ENCODE measurements at regions of chr10 and their contacts with region 1.

Region 1: GRCh38 chr10:132503581-132504421 is 33.8 kb upstream of the INPP5A start:
- DNase-seq: no peak
- ATAC-seq: no peak
- H3K4me3 ChIP-seq: no peak overlapping the region
- H3K27ac ChIP-seq: no peak overlapping the region
- H3K4me1 ChIP-seq: no peaks in the 10 kb centered on the region; the same call in 1 of the 2 replicates
- H3K27me3 ChIP-seq: peaks cover 23% of the 10 kb centered on the region
- CTCF ChIP-seq: no peak
- POLR2A ChIP-seq: no peak
- RAD21 ChIP-seq: no peak

Region 2: DNA sequence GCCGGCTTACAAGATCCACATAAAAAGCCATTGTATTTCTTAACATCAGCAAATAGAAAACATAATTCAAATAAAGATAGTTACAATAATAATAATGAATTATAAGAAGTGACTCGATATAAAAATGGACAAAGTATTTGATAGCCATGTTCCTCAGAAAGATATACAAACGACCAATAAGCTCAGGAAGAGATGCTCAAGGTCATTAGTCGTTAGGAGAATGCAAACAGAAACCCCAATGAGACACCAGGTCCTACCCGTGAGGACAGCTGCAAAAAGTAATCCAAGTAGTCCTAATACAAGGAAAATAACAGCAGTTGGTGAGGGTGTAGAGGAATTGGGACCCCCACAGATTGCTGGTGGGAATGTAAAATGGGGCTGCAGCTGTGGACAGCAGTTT is 20.4 kb before region 1 on chr10:
- CTCF ChIA-PET with region 1: no interaction called
- POLR2A ChIA-PET with region 1: no interaction called
- dilution Hi-C with region 1: no loop called
- in situ Hi-C with region 1: no loop called
- intact Hi-C with region 1: loop called (anchors 1 kb)
- DNase-seq: no peak
- ATAC-seq: no peak
- H3K4me3 ChIP-seq: no peak overlapping the region
- H3K27ac ChIP-seq: no peak overlapping the region
- H3K4me1 ChIP-seq: peaks cover 7% of the 10 kb centered on the region
- H3K27me3 ChIP-seq: no peaks in the 10 kb centered on the region; the same call in 1 of the 2 replicates
- CTCF ChIP-seq: no peak
- POLR2A ChIP-seq: no peak
- RAD21 ChIP-seq: no peak

Region 3: DNA sequence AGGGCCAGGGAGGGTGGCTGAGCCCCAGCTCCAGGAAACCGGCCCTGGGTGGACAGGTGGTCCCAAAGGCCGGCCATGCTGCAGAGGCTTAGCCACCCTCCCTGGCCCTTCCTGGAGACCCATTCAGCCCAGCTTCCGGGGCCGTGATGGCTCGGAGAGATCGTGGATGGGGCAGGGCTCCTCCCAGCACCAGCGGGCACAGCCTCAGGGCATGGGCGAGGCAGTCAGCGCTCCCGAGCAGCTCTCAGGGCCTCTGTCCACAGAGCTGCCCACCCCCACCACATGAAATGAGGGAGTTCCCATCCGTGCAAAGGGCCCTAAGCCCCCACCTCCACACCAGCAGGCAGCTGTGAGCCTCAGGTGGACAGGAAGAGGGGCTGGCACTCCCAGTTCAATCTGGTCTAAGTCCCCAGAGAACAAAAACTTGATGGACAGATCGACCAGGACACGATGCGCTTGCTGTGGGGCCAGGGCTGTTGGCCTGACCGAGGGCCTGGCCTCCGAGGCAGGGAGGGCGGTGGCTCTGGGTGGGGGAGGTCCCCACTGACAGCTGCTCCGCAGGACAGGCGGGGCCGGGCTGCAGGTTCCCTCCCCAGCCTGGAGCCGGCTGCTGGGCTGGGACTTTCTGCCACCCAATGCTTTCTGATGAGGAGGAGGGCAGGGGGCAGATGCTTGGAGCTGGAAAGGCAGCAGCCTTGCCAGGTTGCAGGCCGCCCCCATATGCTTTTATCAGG is 546.4 kb after region 1 on chr10:
- CTCF ChIA-PET with region 1: no interaction called
- POLR2A ChIA-PET with region 1: no interaction called
- dilution Hi-C with region 1: no loop called
- in situ Hi-C with region 1: no loop called
- intact Hi-C with region 1: no loop called
- DNase-seq: no peak
- ATAC-seq: no peak
- H3K4me3 ChIP-seq: no peak overlapping the region
- H3K27ac ChIP-seq: no peak overlapping the region
- H3K4me1 ChIP-seq: no peaks in the 10 kb centered on the region
- H3K27me3 ChIP-seq: peaks cover 2% of the 10 kb centered on the region; the same call in 1 of the 2 replicates
- CTCF ChIP-seq: no peak
- POLR2A ChIP-seq: no peak
- RAD21 ChIP-seq: no peak

Measured in IMR-90 (cell line).